ENCODE measurements at regions of chr5 and their contacts with region 1.

Region 1: GRCh38 chr5:138575194-138576015 is at the start of gene HSPA9:
- DNase-seq: peak; percentile 99
- ATAC-seq: peak; percentile 92
- H3K4me3 ChIP-seq: peak within 1 kb of the TSS; percentile 85
- H3K27ac ChIP-seq: peak within 1 kb of the TSS; percentile 97
- H3K4me1 ChIP-seq: no peaks in the 10 kb centered on the region
- H3K27me3 ChIP-seq: no peaks in the 10 kb centered on the region
- CTCF ChIP-seq: no peak
- EP300 ChIP-seq: no peak; a peak in 1 of 4 replicates
- POLR2A ChIP-seq: peak; percentile 90
- RAD21 ChIP-seq: no peak
- polyA plus RNA-seq, gene HSPA9: 145 to 294 TPM

Region 2: DNA sequence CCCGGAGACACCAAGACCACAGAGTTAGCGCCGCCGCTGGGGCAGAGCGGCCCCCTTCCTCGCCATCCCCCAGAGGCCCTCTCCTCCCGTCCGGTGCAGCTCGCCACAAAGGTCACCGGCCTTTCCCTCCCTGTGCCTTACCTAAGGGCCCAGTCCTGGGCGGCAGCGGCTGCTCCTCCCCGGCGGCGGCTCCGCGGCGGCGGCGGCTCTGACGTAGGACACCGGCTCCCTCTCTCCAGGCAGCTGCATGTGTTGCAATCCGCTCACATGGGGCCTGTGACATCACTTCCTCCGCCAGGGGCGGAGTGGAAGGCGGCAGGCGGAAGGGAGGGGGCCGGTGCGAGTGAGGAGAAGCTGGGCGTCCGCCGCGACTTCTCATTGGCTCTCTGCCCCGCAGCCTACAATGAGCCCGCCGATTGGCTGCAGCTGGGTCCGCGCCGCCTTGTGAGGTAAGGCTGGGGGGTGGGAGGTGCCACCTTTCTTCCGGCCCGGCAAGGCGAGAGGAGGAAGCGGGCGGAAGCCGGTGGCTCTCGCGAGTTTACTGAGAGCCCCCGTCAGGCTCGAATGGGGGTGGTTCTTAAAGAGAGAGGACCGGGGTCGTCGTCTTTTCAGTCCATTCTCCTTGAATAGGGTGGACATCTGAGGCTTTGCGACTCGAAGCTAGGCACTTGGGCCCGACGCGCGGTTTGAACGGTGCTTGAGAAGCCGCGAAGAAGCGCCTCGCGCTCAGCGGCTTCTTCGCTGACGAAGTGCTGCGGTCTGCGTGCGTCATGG is 32.3 kb before region 1 on chr5 and contains the start of gene ETF1:
- CTCF ChIA-PET with region 1: interaction called, 10 read pairs
- POLR2A ChIA-PET with region 1: interaction called, 26 read pairs
- RAD21 ChIA-PET with region 1: interaction called, 16 read pairs
- SMC1A ChIA-PET with region 1: interaction called, 4 read pairs
- in situ Hi-C with region 1: no loop called
- intact Hi-C with region 1: no loop called
- DNase-seq: peak; percentile 97
- ATAC-seq: peak; percentile 92
- H3K4me3 ChIP-seq: peak within 1 kb of the TSS; percentile 99
- H3K27ac ChIP-seq: peak within 1 kb of the TSS; percentile 100
- H3K4me1 ChIP-seq: peaks cover 17% of the 10 kb centered on the region
- H3K27me3 ChIP-seq: no peaks in the 10 kb centered on the region
- CTCF ChIP-seq: no peak
- EP300 ChIP-seq: 0 out of 4 replicates have a peak, but pooled peaks have one; percentile 6 to 7
- POLR2A ChIP-seq: peak; percentile 86
- RAD21 ChIP-seq: no peak
- polyA plus RNA-seq, gene ETF1: 29.8 to 44.9 TPM

Region 3: DNA sequence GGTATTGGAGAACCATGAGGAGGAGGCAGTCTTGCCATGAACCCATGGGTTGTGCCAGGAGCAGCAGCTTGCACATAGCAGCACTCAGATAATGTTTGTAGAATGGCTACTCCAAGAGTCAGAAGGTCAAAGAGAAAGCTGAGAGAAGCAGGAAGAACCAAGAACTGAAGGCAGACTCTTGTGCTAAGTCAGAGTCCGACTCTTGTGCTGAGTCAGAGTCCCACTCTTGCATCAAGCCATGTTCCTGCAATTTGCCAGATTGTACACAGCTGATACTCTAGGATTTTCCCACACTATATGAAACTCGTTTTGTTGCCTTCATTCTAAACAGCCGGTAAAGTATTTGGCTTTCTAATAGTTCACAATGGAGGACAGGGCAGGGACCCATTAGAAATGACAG is 26.0 kb after region 1 on chr5:
- CTCF ChIA-PET with region 1: interaction called, 41 read pairs
- POLR2A ChIA-PET with region 1: interaction called, 7 read pairs
- RAD21 ChIA-PET with region 1: interaction called, 9 read pairs
- SMC1A ChIA-PET with region 1: interaction called, 14 read pairs
- in situ Hi-C with region 1: no loop called
- intact Hi-C with region 1: no loop called
- DNase-seq: no peak
- ATAC-seq: peak; percentile 47
- H3K4me3 ChIP-seq: no peak overlapping the region
- H3K27ac ChIP-seq: 0 out of 2 replicates have a peak overlapping the region, but pooled peaks have one; percentile 3
- H3K4me1 ChIP-seq: peaks cover 34% of the 10 kb centered on the region
- H3K27me3 ChIP-seq: no peaks in the 10 kb centered on the region
- CTCF ChIP-seq: no peak
- EP300 ChIP-seq: no peak
- POLR2A ChIP-seq: no peak
- RAD21 ChIP-seq: no peak

Region 4: GRCh38 chr5:138641547-138642298 is 66.3 kb after region 1 on chr5:
- CTCF ChIA-PET with region 1: interaction called, 16 read pairs
- POLR2A ChIA-PET with region 1: no interaction called
- RAD21 ChIA-PET with region 1: interaction called, 7 read pairs
- SMC1A ChIA-PET with region 1: no interaction called
- in situ Hi-C with region 1: no loop called
- intact Hi-C with region 1: no loop called
- DNase-seq: no peak
- ATAC-seq: peak; percentile 91
- H3K4me3 ChIP-seq: no peak overlapping the region
- H3K27ac ChIP-seq: no peak overlapping the region
- H3K4me1 ChIP-seq: no peaks in the 10 kb centered on the region
- H3K27me3 ChIP-seq: no peaks in the 10 kb centered on the region; a peak in 2 of 4 replicates
- CTCF ChIP-seq: peak; percentile 71 to 78 (median 72)
- EP300 ChIP-seq: no peak
- POLR2A ChIP-seq: no peak
- RAD21 ChIP-seq: peak; percentile 86

Region 5: GRCh38 chr5:139262742-139263445 is 687.5 kb after region 1 on chr5:
- CTCF ChIA-PET with region 1: interaction called, 6 read pairs
- POLR2A ChIA-PET with region 1: no interaction called
- RAD21 ChIA-PET with region 1: interaction called, 5 read pairs
- SMC1A ChIA-PET with region 1: interaction called, 3 read pairs
- in situ Hi-C with region 1: loop called (anchors 10 kb)
- intact Hi-C with region 1: loop called (anchors 1 kb)
- DNase-seq: peak; percentile 40
- ATAC-seq: peak; percentile 99
- H3K4me3 ChIP-seq: no peak overlapping the region
- H3K27ac ChIP-seq: no peak overlapping the region
- H3K4me1 ChIP-seq: peaks cover 5% of the 10 kb centered on the region
- H3K27me3 ChIP-seq: no peaks in the 10 kb centered on the region; a peak in 1 of 4 replicates
- CTCF ChIP-seq: peak; percentile 83 to 93 (median 85)
- EP300 ChIP-seq: no peak
- POLR2A ChIP-seq: no peak
- RAD21 ChIP-seq: peak; percentile 99